ENCODE measurements at regions of chr22 and their contacts with region 1.

Region 1: DNA sequence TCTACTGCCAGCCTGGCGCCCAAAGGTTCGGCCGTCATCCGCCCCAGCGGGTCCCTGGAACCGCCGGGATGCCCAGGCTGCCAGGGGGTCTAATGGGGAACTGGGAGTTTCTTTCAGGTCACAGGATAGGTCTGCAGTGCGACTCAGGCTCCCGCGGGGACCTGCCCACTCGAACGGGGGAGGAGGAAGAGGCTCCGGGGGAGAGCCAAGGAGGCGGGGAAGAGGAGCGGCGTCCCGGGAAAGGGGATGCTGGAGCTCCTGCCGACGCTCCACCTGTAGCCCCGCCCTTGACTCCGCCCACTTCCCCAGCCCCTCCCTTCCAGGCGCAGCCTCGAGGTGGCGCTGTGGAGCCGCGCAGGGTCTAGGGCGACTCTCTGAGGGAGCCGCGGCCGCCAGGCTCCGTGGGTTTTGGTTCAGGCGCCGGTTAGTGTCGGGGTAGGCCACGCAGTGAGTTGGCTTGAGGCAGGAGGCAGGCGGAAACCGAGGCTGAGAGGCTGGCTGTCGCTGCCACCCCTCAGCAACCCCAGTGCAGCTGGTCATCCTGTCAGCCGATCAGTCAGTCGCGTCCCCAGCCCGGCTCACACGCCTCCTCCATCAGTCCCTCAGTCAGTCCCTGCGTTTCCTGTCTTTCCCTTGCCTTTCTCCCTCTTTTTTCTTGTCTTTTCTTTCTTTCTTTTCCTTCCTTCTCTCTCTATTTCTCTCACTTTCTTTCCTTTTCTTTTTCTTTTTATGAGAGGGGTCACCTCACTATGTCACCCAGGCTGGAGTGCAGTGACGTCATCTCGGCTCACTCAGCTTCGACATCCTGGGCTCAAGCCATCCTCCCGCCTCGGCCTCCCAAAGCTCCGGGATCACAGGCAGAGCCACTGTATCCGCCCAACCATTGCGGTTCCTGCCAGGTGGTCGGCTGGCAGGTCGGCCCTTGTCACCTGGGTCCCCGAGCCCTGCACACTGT is 26.4 kb downstream of the YWHAH start:
- DNase-seq: peak; percentile 79 to 93 (median 87)
- ATAC-seq: peak; percentile 99
- H3K4me3 ChIP-seq: peak overlapping the region; percentile 55 to 58
- H3K4me3 Mint-ChIP-seq: peak overlapping the region; percentile 81
- H3K27ac ChIP-seq: no peak overlapping the region
- H3K27ac Mint-ChIP-seq: peak overlapping the region; percentile 64
- H3K4me1 ChIP-seq: peaks cover 8% of the 10 kb centered on the region
- H3K4me1 Mint-ChIP-seq: peaks cover 12% of the 10 kb centered on the region
- H3K27me3 ChIP-seq: no peaks in the 10 kb centered on the region
- H3K27me3 Mint-ChIP-seq: no peaks in the 10 kb centered on the region
- CTCF ChIP-seq: peak; percentile 82

Region 2: DNA sequence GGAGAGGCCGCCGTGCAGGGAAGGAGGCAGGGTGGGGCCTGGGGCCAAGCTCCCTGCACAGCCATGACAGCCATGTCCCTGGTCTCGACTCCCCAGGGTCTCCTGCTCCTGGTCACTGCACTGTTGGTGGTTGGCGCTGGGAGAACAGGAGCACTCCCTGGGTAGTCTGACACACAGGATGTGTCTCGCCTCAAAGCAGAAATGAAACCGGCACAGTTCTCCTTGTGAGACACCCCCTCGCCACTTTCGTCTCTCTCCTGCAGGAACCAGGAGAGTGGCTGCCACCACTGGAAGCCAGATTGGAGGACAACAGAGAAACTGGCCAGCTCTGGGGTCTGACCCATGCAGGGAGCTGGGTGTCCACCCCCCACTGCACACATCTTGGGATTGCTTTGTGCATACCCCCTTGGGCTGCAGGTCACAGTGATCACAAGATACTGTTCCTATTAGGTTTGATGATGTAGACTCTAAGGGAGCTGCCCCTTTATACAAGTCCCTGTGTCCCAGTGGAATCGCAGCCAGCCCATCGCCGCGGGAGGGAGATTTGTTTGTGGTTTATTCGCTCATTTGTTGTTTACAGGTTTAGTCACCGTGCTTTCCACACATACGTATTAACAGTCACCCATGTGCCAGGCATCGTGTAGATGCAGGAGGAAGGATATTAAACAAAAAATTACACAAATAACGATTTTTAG is 53.4 kb before region 1 on chr22:
- CTCF ChIA-PET with region 1: no interaction called
- POLR2A ChIA-PET with region 1: no interaction called
- intact Hi-C with region 1: no loop called
- DNase-seq: peak in 1 of 9 experiments; percentile 30
- ATAC-seq: no peak
- H3K4me3 ChIP-seq: no peak overlapping the region
- H3K4me3 Mint-ChIP-seq: peak overlapping the region; percentile 19
- H3K27ac ChIP-seq: no peak overlapping the region
- H3K27ac Mint-ChIP-seq: no peak overlapping the region
- H3K4me1 ChIP-seq: no peaks in the 10 kb centered on the region
- H3K4me1 Mint-ChIP-seq: peaks cover 3% of the 10 kb centered on the region
- H3K27me3 ChIP-seq: no peaks in the 10 kb centered on the region
- H3K27me3 Mint-ChIP-seq: no peaks in the 10 kb centered on the region
- CTCF ChIP-seq: no peak

Region 3: GRCh38 chr22:31943976-31944699 is 26.6 kb before region 1 on chr22 and contains the start of gene YWHAH:
- CTCF ChIA-PET with region 1: interaction called, 12 read pairs
- POLR2A ChIA-PET with region 1: interaction called, 3 read pairs
- intact Hi-C with region 1: loop called (anchors 1 kb)
- DNase-seq: peak; percentile 71 to 91 (median 84)
- ATAC-seq: peak; percentile 65
- H3K4me3 ChIP-seq: peak within 1 kb of the TSS; percentile 64 to 69
- H3K4me3 Mint-ChIP-seq: peak within 1 kb of the TSS; percentile 92
- H3K27ac ChIP-seq: peak within 1 kb of the TSS; percentile 62 to 85
- H3K27ac Mint-ChIP-seq: peak within 1 kb of the TSS; percentile 90
- H3K4me1 ChIP-seq: peaks cover 17% of the 10 kb centered on the region
- H3K4me1 Mint-ChIP-seq: peaks cover 12% of the 10 kb centered on the region
- H3K27me3 ChIP-seq: no peaks in the 10 kb centered on the region
- H3K27me3 Mint-ChIP-seq: no peaks in the 10 kb centered on the region
- CTCF ChIP-seq: no peak
- total RNA-seq, gene YWHAH: 22.4 to 24.3 TPM

Region 4: GRCh38 chr22:31954535-31955523 is 15.9 kb before region 1 on chr22:
- CTCF ChIA-PET with region 1: interaction called, 31 read pairs
- POLR2A ChIA-PET with region 1: interaction called, 4 read pairs
- intact Hi-C with region 1: no loop called
- DNase-seq: no peak
- ATAC-seq: no peak
- H3K4me3 ChIP-seq: no peak overlapping the region
- H3K4me3 Mint-ChIP-seq: no peak overlapping the region
- H3K27ac ChIP-seq: peak overlapping the region in 1 of 2 experiments; percentile 47
- H3K27ac Mint-ChIP-seq: peak overlapping the region; percentile 65
- H3K4me1 ChIP-seq: peaks cover 34% of the 10 kb centered on the region
- H3K4me1 Mint-ChIP-seq: peaks cover 75% of the 10 kb centered on the region
- H3K27me3 ChIP-seq: no peaks in the 10 kb centered on the region
- H3K27me3 Mint-ChIP-seq: no peaks in the 10 kb centered on the region
- CTCF ChIP-seq: no peak

Region 5: GRCh38 chr22:32265882-32266767 is 295.4 kb after region 1 on chr22:
- CTCF ChIA-PET with region 1: interaction called, 23 read pairs
- POLR2A ChIA-PET with region 1: no interaction called
- intact Hi-C with region 1: loop called in 1 of 2 experiments (anchors 1 kb)
- DNase-seq: peak; percentile 27 to 76 (median 62)
- ATAC-seq: peak; percentile 63
- H3K4me3 ChIP-seq: no peak overlapping the region
- H3K4me3 Mint-ChIP-seq: no peak overlapping the region
- H3K27ac ChIP-seq: no peak overlapping the region
- H3K27ac Mint-ChIP-seq: no peak overlapping the region
- H3K4me1 ChIP-seq: no peaks in the 10 kb centered on the region
- H3K4me1 Mint-ChIP-seq: peaks cover 7% of the 10 kb centered on the region
- H3K27me3 ChIP-seq: no peaks in the 10 kb centered on the region
- H3K27me3 Mint-ChIP-seq: peaks cover 8% of the 10 kb centered on the region
- CTCF ChIP-seq: peak; percentile 89

Region 6: GRCh38 chr22:32411829-32412592 is 441.2 kb after region 1 on chr22 and contains the start of gene RTCB:
- CTCF ChIA-PET with region 1: no interaction called
- POLR2A ChIA-PET with region 1: no interaction called
- intact Hi-C with region 1: loop called in 1 of 2 experiments (anchors 10 kb)
- DNase-seq: peak; percentile 88 to 96 (median 92)
- ATAC-seq: peak; percentile 88
- H3K4me3 ChIP-seq: peak within 1 kb of the TSS; percentile 82 to 94
- H3K4me3 Mint-ChIP-seq: peak within 1 kb of the TSS; percentile 98
- H3K27ac ChIP-seq: peak within 1 kb of the TSS; percentile 56 to 72
- H3K27ac Mint-ChIP-seq: peak within 1 kb of the TSS; percentile 96
- H3K4me1 ChIP-seq: peaks cover 22% of the 10 kb centered on the region
- H3K4me1 Mint-ChIP-seq: peaks cover 50% of the 10 kb centered on the region
- H3K27me3 ChIP-seq: peaks cover 0 to 2% of the 10 kb centered on the region in 2 experiments
- H3K27me3 Mint-ChIP-seq: peaks cover 3% of the 10 kb centered on the region
- CTCF ChIP-seq: no peak
- total RNA-seq, gene RTCB: 42.8 to 46.5 TPM

Region 7: DNA sequence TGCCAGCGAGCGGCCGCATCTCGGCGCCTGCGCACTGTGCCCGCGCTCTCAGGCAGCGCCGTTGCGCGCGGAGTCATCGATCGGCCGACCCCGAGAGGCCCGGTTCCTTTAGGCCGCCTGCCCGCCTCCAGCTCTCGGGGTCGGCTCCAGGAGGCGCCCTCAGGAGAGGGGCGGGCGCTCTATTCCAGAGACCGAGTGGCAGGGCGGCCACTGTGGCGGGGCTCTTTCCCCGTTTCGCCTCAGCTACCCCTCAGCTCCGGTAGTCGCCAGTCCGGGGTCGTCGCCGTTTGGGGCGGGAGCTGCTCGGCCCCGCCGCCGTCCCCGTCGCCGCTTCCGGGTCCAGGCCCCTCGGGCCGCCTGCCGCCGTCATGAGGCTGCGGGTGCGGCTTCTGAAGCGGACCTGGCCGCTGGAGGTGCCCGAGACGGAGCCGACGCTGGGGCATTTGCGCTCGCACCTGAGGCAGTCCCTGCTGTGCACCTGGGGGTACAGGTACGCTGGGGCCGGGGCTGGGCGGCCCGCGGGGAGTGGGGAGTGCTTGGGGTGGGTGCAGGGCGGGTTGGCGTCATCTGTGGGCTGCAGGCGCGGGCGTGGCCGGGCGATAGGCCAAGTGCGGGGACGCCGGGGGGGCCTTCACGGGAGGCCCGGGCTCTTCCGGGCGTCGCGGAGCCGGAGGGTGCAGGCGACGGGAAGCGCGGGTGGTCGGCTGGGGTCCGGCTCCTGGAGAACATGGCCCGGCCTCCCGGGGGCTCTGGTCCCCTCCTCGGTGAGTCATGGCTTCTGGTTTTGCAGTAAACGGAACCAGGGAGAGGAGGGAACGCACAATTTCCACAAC is 504.1 kb after region 1 on chr22 and contains the start of gene FBXO7:
- CTCF ChIA-PET with region 1: no interaction called
- POLR2A ChIA-PET with region 1: no interaction called
- intact Hi-C with region 1: loop called in 1 of 2 experiments (anchors 2 kb)
- DNase-seq: peak; percentile 70 to 95 (median 86)
- ATAC-seq: peak; percentile 86
- H3K4me3 ChIP-seq: peak within 1 kb of the TSS; percentile 83 to 91
- H3K4me3 Mint-ChIP-seq: peak within 1 kb of the TSS; percentile 90
- H3K27ac ChIP-seq: peak within 1 kb of the TSS; percentile 90 to 92
- H3K27ac Mint-ChIP-seq: peak within 1 kb of the TSS; percentile 96
- H3K4me1 ChIP-seq: peaks cover 39% of the 10 kb centered on the region
- H3K4me1 Mint-ChIP-seq: peaks cover 24% of the 10 kb centered on the region
- H3K27me3 ChIP-seq: no peaks in the 10 kb centered on the region
- H3K27me3 Mint-ChIP-seq: no peaks in the 10 kb centered on the region
- CTCF ChIP-seq: peak; percentile 23
- total RNA-seq, gene FBXO7: 172 to 174 TPM

Measured in CD8-positive, alpha-beta T cell (primary cell).